GM12878 (cell line): ENCODE measurements at regions of chr16 and their contacts with region 1.

Region 1: DNA sequence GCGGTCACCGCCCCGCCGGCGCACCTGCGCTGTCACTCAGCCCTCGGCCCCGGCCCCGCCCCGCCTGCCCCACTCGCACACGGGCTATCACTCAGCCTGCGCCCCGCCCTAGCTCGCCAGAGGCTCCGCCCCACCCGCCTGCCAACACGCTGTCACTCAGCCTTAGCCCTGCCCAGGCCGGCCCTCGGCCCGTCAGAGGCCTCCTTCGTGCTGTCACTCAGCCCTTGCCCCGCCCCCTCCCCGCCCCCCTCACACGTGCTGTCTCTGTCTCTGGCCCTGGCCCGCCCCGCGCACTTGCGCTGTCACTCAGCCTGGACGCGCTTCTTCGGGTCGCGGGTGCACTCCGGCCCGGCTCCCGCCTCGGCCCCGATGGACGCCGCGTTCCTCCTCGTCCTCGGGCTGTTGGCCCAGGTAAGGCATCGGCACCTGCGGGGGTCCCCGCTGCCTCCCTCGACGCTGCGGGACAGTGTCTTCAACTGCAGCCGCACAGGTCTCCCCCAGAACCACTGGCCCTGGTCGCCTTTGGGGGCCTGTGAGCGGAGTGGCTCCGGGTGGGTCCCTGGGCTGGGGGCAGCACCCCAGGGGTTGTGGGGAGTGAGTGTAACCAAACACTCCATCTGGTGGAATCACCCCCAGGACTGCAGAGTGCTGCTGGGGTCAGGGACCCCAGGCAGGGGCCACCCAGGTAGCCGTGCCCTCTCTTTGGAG is at the start of gene CDH15:
- DNase-seq: peak; percentile 80
- ATAC-seq: peak; percentile 88
- H3K4me3 ChIP-seq: no peak within 1 kb of the TSS; the same call in 1 of the 2 replicates
- H3K27ac ChIP-seq: no peak within 1 kb of the TSS
- H3K4me1 ChIP-seq: peaks cover 7% of the 10 kb centered on the region
- H3K27me3 ChIP-seq: peaks cover 0 to 8% of the 10 kb centered on the region in 2 experiments; a peak in 3 of 4 replicates
- CTCF ChIP-seq: no peak
- EP300 ChIP-seq: no peak
- POLR2A ChIP-seq: no peak
- RAD21 ChIP-seq: no peak
- polyA plus RNA-seq, gene CDH15: 0.02 TPM in 1 of 2 experiments, not detected in the other

Region 2: GRCh38 chr16:88549671-88550245 is 621.9 kb before region 1 on chr16:
- CTCF ChIA-PET with region 1: no interaction called
- POLR2A ChIA-PET with region 1: no interaction called
- RAD21 ChIA-PET with region 1: no interaction called
- SMC1A ChIA-PET with region 1: no interaction called
- in situ Hi-C with region 1: no loop called
- intact Hi-C with region 1: no loop called
- DNase-seq: no peak
- ATAC-seq: peak; percentile 22; the same call in 2 of the 3 replicates
- H3K4me3 ChIP-seq: no peak overlapping the region
- H3K27ac ChIP-seq: no peak overlapping the region
- H3K4me1 ChIP-seq: peaks cover 8% of the 10 kb centered on the region
- H3K27me3 ChIP-seq: no peaks in the 10 kb centered on the region; a peak in 1 of 4 replicates
- CTCF ChIP-seq: no peak
- EP300 ChIP-seq: no peak
- POLR2A ChIP-seq: no peak
- RAD21 ChIP-seq: no peak

Region 3: GRCh38 chr16:88743693-88744576 is 427.7 kb before region 1 on chr16:
- CTCF ChIA-PET with region 1: no interaction called
- POLR2A ChIA-PET with region 1: no interaction called
- RAD21 ChIA-PET with region 1: no interaction called
- SMC1A ChIA-PET with region 1: interaction called, 3 read pairs
- in situ Hi-C with region 1: loop called (anchors 5 kb)
- intact Hi-C with region 1: no loop called
- DNase-seq: no peak
- ATAC-seq: peak; percentile 56
- H3K4me3 ChIP-seq: no peak overlapping the region
- H3K27ac ChIP-seq: no peak overlapping the region
- H3K4me1 ChIP-seq: peaks cover 11% of the 10 kb centered on the region
- H3K27me3 ChIP-seq: no peaks in the 10 kb centered on the region
- CTCF ChIP-seq: peak; percentile 72 to 85 (median 80)
- EP300 ChIP-seq: no peak
- POLR2A ChIP-seq: no peak
- RAD21 ChIP-seq: peak; percentile 49

Region 4: DNA sequence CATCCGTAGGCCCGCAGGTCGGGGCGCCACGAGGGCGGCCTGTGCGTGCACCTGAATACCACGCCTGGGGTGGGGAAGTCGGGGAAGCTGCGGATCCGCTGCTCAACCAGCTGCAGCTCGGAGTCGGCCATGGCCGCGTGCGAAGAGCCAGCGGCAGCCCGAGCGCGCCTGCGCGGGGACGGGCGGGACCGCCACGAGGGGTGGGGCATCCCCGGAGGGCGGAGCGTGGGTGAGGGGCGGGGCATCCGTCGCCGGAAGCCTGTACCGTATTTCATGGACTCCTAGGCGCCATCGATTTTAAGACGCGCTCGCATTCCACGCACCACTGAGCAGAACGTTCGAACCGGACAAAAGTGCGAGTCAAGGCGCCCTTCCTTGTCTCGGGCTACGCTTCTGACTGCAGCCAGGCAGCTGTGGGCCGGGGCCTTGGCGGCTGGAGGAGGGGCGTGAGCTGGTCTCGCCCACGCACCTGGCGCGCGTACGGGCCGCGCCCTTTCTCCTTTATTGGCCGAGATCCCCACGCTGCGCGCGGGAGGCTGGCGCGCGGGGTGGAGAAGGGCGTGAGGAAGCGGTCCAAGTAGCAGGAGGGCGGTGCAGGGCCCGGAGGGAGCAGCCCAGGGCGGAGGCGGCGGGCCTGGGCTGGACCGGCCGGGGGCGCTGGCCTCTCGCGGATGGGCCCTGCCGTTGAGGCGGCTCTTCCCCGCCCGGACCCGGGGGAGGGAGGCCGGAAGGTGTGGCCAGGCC is 359.7 kb before region 1 on chr16 and contains the start of gene APRT:
- CTCF ChIA-PET with region 1: interaction called, 13 read pairs
- POLR2A ChIA-PET with region 1: interaction called, 3 read pairs
- RAD21 ChIA-PET with region 1: interaction called, 5 read pairs
- SMC1A ChIA-PET with region 1: interaction called, 4 read pairs
- in situ Hi-C with region 1: no loop called
- intact Hi-C with region 1: loop called (anchors 1 kb)
- DNase-seq: peak; percentile 83
- ATAC-seq: peak; percentile 83
- H3K4me3 ChIP-seq: peak within 1 kb of the TSS; percentile 85
- H3K27ac ChIP-seq: peak within 1 kb of the TSS; percentile 95
- H3K4me1 ChIP-seq: peaks cover 20% of the 10 kb centered on the region
- H3K27me3 ChIP-seq: no peaks in the 10 kb centered on the region
- CTCF ChIP-seq: peak in 2 of 3 experiments; percentile 39 to 56; a peak in 3 of 6 replicates
- EP300 ChIP-seq: no peak
- POLR2A ChIP-seq: peak; percentile 91
- RAD21 ChIP-seq: 0 out of 2 replicates have a peak, but pooled peaks have one; percentile 30
- polyA plus RNA-seq, gene APRT: 30.6 to 100 TPM

Region 5: DNA sequence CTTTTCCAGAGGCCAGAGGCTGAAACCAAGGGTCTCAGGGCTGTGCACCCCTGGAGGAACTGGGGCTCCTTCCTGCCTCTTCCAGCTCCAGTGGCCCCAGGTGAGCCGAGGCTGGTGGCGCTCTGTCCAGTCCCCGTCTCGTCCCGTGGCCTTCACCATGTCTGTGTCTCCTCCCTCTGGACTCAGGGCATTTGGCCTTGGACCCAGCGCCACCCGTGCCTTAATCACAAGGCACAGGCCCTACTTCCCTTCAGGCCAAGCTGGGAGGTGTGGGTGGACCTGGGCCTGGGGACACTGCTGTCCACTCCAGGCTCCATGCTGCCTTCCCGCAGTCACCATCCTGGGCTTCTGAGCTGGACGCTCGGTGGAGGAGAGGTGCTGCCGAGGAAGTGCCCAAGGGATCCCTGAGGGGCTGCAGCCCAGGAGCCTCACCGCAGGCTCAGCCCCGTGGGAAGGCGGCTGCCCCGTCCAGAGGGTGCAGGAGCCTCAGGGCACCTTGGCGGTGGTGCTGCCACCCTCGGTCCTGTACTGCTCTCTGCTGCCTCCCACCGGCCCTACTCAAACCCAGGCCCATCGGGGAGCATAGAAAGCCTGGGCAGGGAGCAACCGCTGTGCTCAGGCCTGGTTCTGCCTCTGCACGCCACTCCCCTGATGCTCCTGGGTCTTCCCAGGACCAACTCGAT is 350.3 kb before region 1 on chr16:
- CTCF ChIA-PET with region 1: interaction called, 5 read pairs
- POLR2A ChIA-PET with region 1: no interaction called
- RAD21 ChIA-PET with region 1: no interaction called
- SMC1A ChIA-PET with region 1: no interaction called
- in situ Hi-C with region 1: loop called (anchors 5 kb)
- intact Hi-C with region 1: loop called (anchors 1 kb)
- DNase-seq: no peak
- ATAC-seq: peak; percentile 47
- H3K4me3 ChIP-seq: no peak overlapping the region
- H3K27ac ChIP-seq: no peak overlapping the region
- H3K4me1 ChIP-seq: no peaks in the 10 kb centered on the region
- H3K27me3 ChIP-seq: no peaks in the 10 kb centered on the region
- CTCF ChIP-seq: no peak
- EP300 ChIP-seq: no peak
- POLR2A ChIP-seq: no peak
- RAD21 ChIP-seq: no peak

Region 6: GRCh38 chr16:88941913-88942909 is 229.4 kb before region 1 on chr16:
- CTCF ChIA-PET with region 1: interaction called, 8 read pairs
- POLR2A ChIA-PET with region 1: no interaction called
- RAD21 ChIA-PET with region 1: interaction called, 6 read pairs
- SMC1A ChIA-PET with region 1: interaction called, 6 read pairs
- in situ Hi-C with region 1: loop called (anchors 5 kb)
- intact Hi-C with region 1: loop called (anchors 1 kb)
- DNase-seq: no peak
- ATAC-seq: peak; percentile 76
- H3K4me3 ChIP-seq: peak overlapping the region; percentile 64
- H3K27ac ChIP-seq: no peak overlapping the region; the same call in 1 of the 2 replicates
- H3K4me1 ChIP-seq: peaks cover 27% of the 10 kb centered on the region
- H3K27me3 ChIP-seq: peaks cover 0 to 1% of the 10 kb centered on the region in 2 experiments; a peak in 1 of 4 replicates
- CTCF ChIP-seq: peak; percentile 66 to 76 (median 66); a peak in 5 of 6 replicates
- EP300 ChIP-seq: no peak
- POLR2A ChIP-seq: no peak
- RAD21 ChIP-seq: peak; percentile 88

Region 7: GRCh38 chr16:88993166-88993761 is 178.4 kb before region 1 on chr16:
- CTCF ChIA-PET with region 1: no interaction called
- POLR2A ChIA-PET with region 1: no interaction called
- RAD21 ChIA-PET with region 1: no interaction called
- SMC1A ChIA-PET with region 1: no interaction called
- in situ Hi-C with region 1: no loop called
- intact Hi-C with region 1: no loop called
- DNase-seq: no peak
- ATAC-seq: peak; percentile 49
- H3K4me3 ChIP-seq: no peak overlapping the region
- H3K27ac ChIP-seq: no peak overlapping the region
- H3K4me1 ChIP-seq: peaks cover 7% of the 10 kb centered on the region
- H3K27me3 ChIP-seq: no peaks in the 10 kb centered on the region
- CTCF ChIP-seq: no peak
- EP300 ChIP-seq: no peak
- POLR2A ChIP-seq: no peak
- RAD21 ChIP-seq: no peak

Region 8: GRCh38 chr16:89193021-89193575 is 21.5 kb after region 1 on chr16:
- CTCF ChIA-PET with region 1: interaction called, 3 read pairs
- POLR2A ChIA-PET with region 1: no interaction called
- RAD21 ChIA-PET with region 1: interaction called, 6 read pairs
- SMC1A ChIA-PET with region 1: no interaction called
- in situ Hi-C with region 1: no loop called
- intact Hi-C with region 1: loop called (anchors 2 kb)
- DNase-seq: no peak
- ATAC-seq: peak; percentile 11
- H3K4me3 ChIP-seq: no peak overlapping the region
- H3K27ac ChIP-seq: no peak overlapping the region
- H3K4me1 ChIP-seq: no peaks in the 10 kb centered on the region
- H3K27me3 ChIP-seq: no peaks in the 10 kb centered on the region
- CTCF ChIP-seq: no peak
- EP300 ChIP-seq: no peak
- POLR2A ChIP-seq: no peak
- RAD21 ChIP-seq: no peak

Region 9: GRCh38 chr16:89217388-89218191 is 46.0 kb after region 1 on chr16 and contains the start of gene ZNF778:
- CTCF ChIA-PET with region 1: interaction called, 4 read pairs
- POLR2A ChIA-PET with region 1: no interaction called
- RAD21 ChIA-PET with region 1: interaction called, 4 read pairs
- SMC1A ChIA-PET with region 1: interaction called, 3 read pairs
- in situ Hi-C with region 1: no loop called
- intact Hi-C with region 1: loop called (anchors 2 kb)
- DNase-seq: peak; percentile 40
- ATAC-seq: peak; percentile 95
- H3K4me3 ChIP-seq: peak within 1 kb of the TSS; percentile 92
- H3K27ac ChIP-seq: peak within 1 kb of the TSS; percentile 86
- H3K4me1 ChIP-seq: peaks cover 3% of the 10 kb centered on the region
- H3K27me3 ChIP-seq: no peaks in the 10 kb centered on the region
- CTCF ChIP-seq: no peak
- EP300 ChIP-seq: no peak
- POLR2A ChIP-seq: peak; percentile 92
- RAD21 ChIP-seq: no peak
- polyA plus RNA-seq, gene ZNF778: 0.20 to 0.40 TPM

Region 10: GRCh38 chr16:89442990-89443731 is 271.5 kb after region 1 on chr16:
- CTCF ChIA-PET with region 1: no interaction called
- POLR2A ChIA-PET with region 1: no interaction called
- RAD21 ChIA-PET with region 1: no interaction called
- SMC1A ChIA-PET with region 1: no interaction called
- in situ Hi-C with region 1: no loop called
- intact Hi-C with region 1: no loop called
- DNase-seq: no peak
- ATAC-seq: no peak
- H3K4me3 ChIP-seq: no peak overlapping the region
- H3K27ac ChIP-seq: no peak overlapping the region
- H3K4me1 ChIP-seq: peaks cover 38% of the 10 kb centered on the region
- H3K27me3 ChIP-seq: no peaks in the 10 kb centered on the region
- CTCF ChIP-seq: no peak
- EP300 ChIP-seq: no peak
- POLR2A ChIP-seq: no peak
- RAD21 ChIP-seq: no peak

Region 11: DNA sequence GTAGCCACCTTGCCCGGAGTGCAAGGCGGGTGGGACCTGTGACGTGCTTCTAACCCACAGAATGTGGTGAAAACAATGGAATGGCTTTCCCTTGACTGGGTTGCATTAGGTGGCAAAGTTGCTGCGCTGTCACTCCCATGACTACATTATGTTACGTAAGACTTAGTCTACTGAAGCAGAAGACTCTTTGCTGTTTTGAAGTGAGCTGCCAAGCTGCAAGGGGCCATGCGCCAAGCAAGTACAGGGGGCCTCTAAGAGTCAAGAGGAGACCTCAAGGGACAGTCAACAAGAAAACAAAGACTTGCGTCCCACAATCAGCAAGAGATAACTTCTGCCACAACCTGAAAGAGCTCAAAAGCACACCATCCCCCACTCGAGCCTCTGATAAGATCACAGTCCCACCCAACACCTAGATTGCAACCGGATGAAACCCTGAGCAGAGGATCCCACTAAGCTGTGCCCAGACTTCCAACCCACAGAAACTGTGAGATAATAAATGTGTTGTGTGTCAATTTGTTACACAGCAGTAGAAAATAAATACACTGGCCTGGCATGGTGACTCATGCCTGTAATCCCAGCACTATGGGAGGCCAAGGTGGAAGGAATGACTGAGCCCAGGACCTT is 302.3 kb after region 1 on chr16:
- CTCF ChIA-PET with region 1: no interaction called
- POLR2A ChIA-PET with region 1: no interaction called
- RAD21 ChIA-PET with region 1: no interaction called
- SMC1A ChIA-PET with region 1: no interaction called
- in situ Hi-C with region 1: no loop called
- intact Hi-C with region 1: no loop called
- DNase-seq: no peak
- ATAC-seq: no peak
- H3K4me3 ChIP-seq: no peak overlapping the region
- H3K27ac ChIP-seq: no peak overlapping the region
- H3K4me1 ChIP-seq: peaks cover 33% of the 10 kb centered on the region
- H3K27me3 ChIP-seq: no peaks in the 10 kb centered on the region
- CTCF ChIP-seq: no peak
- EP300 ChIP-seq: no peak
- POLR2A ChIP-seq: no peak
- RAD21 ChIP-seq: no peak